Cardiac septum (tissue), 1 donor: ENCODE measurements at regions of chr18 and their contacts with region 1.

Region 1: DNA sequence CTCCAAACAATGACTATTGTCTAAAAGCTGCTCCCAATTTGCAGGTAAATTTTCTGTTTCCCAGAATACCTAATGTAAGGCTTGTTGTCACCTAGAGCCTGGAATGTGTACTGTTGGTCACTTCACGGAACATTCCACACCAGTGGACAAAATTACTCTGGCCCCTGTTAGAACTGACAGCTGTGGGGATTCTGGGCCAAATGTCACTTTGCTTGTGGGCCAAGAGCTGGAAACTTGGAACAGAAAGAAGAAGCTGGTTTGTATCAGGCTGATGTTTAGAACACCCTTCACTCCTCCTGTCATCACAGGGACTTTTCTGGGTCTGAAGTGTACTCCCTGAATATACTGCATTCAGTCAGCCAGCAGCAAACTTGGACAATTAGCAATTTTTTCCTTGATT is 495.6 kb upstream of the SYT4 start:
- DNase-seq: peak; percentile 71

Region 2: GRCh38 chr18:43789234-43790000 is 16.5 kb after region 1 on chr18:
- intact Hi-C with region 1: loop called (anchors 2 kb)
- DNase-seq: no peak